PC-9 (cell line): ENCODE measurements at regions of chr1 and their contacts with region 1.

Region 1: GRCh38 chr1:236904874-236905741 is 99.1 kb downstream of the MT1HL1 start:
- DNase-seq: peak; percentile 2 to 82
- H3K4me3 ChIP-seq: no peak overlapping the region
- H3K27ac ChIP-seq: no peak overlapping the region
- H3K4me1 ChIP-seq: no peaks in the 10 kb centered on the region
- H3K27me3 ChIP-seq: peaks cover 13% of the 10 kb centered on the region
- CTCF ChIP-seq: no peak

Region 2: DNA sequence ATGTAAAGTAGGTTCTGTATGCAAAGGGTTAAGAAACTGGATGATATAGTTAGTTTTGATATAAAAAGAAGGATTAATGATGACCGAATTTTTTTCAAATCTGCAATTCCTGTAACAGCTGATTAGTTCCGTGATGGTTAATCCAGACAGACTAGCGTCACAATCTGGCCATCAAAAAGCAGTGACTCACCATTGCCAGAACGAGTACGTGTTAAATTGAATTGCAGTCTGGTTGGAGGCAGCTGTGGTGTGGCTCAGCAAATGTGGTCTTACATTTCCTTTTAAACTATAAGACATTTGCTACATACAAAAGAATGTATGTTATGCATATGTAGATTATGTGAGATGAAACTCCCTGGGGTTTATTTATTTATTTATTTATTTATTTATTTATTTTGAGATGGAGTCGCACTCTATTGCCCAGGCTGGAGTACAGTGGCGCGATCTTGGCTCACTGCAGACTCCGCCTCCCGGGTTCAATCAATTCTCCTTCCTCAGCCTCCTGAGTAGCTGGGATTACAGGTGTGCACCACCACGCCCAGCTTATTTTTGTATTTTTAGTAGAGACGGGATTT is 276.7 kb after region 1 on chr1:
- CTCF ChIA-PET with region 1: no interaction called
- POLR2A ChIA-PET with region 1: no interaction called
- intact Hi-C with region 1: no loop called
- DNase-seq: no peak
- H3K4me3 ChIP-seq: no peak overlapping the region
- H3K27ac ChIP-seq: no peak overlapping the region
- H3K4me1 ChIP-seq: no peaks in the 10 kb centered on the region
- H3K27me3 ChIP-seq: peaks cover 51% of the 10 kb centered on the region
- CTCF ChIP-seq: no peak

Region 3: DNA sequence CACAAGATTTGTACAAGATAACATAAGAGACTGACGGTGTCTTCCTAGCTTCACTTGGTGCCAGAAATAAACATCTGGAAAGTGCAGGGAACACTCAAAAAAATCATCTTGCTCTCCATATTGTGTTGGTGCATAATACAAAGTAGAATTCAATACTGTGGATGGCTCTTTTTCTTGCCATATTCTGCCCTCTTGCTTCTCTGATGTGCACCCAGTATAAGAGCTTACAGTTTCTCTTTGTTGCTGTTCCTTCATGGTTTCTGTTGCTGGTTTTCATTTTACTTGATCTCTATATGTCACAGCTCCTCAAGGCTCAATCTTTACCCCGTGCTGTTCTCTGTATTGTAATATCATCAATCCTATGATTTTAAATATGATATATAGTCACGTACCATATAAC is 1514.1 kb after region 1 on chr1:
- CTCF ChIA-PET with region 1: no interaction called
- POLR2A ChIA-PET with region 1: interaction called, 26 read pairs
- intact Hi-C with region 1: no loop called
- DNase-seq: no peak
- H3K4me3 ChIP-seq: no peak overlapping the region
- H3K27ac ChIP-seq: no peak overlapping the region
- H3K4me1 ChIP-seq: no peaks in the 10 kb centered on the region
- H3K27me3 ChIP-seq: no peaks in the 10 kb centered on the region
- CTCF ChIP-seq: no peak